Naive thymus-derived CD4-positive, alpha-beta T cell (primary cell): ENCODE measurements at regions of chr10 and their contacts with region 1.

Region 1: DNA sequence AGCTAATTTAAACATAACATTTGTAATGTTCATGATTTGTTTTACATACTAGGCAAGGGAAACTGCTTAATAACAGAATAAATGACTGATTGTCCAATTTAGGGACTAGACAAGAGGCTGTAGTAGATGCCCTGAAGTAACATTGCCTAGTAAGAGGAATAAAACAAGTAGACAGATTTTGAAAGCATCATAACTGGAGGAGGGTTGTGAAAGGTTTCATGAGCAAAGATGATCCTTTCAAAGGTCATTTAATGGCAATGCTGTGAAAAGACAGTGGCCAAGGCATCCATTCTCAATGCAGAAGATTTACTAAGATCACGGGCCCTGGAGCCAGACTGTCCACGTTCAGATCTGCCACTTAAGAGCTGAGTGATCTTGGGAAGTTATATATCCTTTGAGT is 44.8 kb upstream of the HHEX start:
- DNase-seq: no peak
- ATAC-seq: no peak
- H3K4me3 ChIP-seq: no peak overlapping the region
- H3K4me3 Mint-ChIP-seq: no peak overlapping the region
- H3K27ac ChIP-seq: no peak overlapping the region
- H3K27ac Mint-ChIP-seq: no peak overlapping the region
- H3K4me1 ChIP-seq: no peaks in the 10 kb centered on the region
- H3K4me1 Mint-ChIP-seq: peaks cover 0 to 13% (median 0%) of the 10 kb centered on the region in 7 donors
- H3K27me3 ChIP-seq: no peaks in the 10 kb centered on the region
- H3K27me3 Mint-ChIP-seq: no peaks in the 10 kb centered on the region

Region 2: GRCh38 chr10:92517034-92517655 is 127.8 kb before region 1 on chr10:
- CTCF ChIA-PET with region 1: no interaction called
- POLR2A ChIA-PET with region 1: no interaction called
- intact Hi-C with region 1: loop called in 1 of 2 experiments (anchors 2 kb)
- DNase-seq: peak; percentile 18 to 74 (median 64)
- ATAC-seq: peak; percentile 98
- H3K4me3 ChIP-seq: no peak overlapping the region
- H3K4me3 Mint-ChIP-seq: no peak overlapping the region
- H3K27ac ChIP-seq: no peak overlapping the region
- H3K27ac Mint-ChIP-seq: peak overlapping the region in 3 of 9 donors; percentile 46 to 64 (median 54)
- H3K4me1 ChIP-seq: peaks cover 0 to 7% of the 10 kb centered on the region in 2 donors
- H3K4me1 Mint-ChIP-seq: peaks cover 7 to 9% (median 8%) of the 10 kb centered on the region in 7 donors
- H3K27me3 ChIP-seq: no peaks in the 10 kb centered on the region
- H3K27me3 Mint-ChIP-seq: no peaks in the 10 kb centered on the region

Region 3: DNA sequence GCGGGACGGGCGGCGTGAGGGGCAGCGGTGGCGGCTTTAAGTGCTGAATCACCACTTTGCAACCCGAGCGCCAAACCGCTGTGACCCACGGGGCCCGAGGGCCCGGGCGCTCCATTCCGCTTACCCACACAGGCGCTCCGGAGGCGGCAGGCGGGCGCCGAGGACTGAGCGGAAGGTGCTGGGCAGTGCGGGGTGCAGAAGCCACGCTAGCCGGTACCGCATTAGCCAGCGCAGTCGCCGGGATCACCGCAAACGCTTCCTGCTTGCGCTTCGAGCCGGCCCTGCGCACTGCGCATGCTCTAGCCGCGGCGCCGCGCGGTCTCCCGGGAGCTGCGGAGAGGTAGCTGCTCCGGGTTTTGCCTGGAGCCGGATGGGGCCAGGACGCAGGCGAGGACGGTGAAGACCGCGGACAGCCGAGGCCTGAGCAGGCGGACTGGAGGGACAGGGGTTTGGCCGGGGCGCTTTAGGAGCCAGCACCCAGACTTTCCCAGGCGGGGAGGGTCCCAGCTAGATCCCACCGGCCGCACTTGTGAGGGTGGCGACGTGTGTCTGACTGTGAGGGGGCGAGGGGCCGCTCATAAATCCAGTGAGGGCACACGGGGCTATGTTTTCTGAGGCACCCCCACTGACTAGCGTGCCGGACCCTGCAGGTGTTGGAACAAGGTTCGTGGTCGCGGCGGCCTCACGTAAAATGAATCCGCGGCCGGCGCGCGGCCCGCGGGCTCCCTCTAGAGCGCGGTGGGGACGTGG is 70.9 kb before region 1 on chr10 and contains the start of gene IDE:
- CTCF ChIA-PET with region 1: no interaction called
- POLR2A ChIA-PET with region 1: no interaction called
- intact Hi-C with region 1: loop called in 1 of 2 experiments (anchors 1 kb)
- DNase-seq: peak; percentile 70 to 89 (median 77)
- ATAC-seq: peak; percentile 88
- H3K4me3 ChIP-seq: peak within 1 kb of the TSS; percentile 90
- H3K4me3 Mint-ChIP-seq: peak within 1 kb of the TSS; percentile 78 to 94 (median 88)
- H3K27ac ChIP-seq: peak within 1 kb of the TSS; percentile 83
- H3K27ac Mint-ChIP-seq: peak within 1 kb of the TSS; percentile 78 to 95 (median 89)
- H3K4me1 ChIP-seq: peaks cover 12 to 14% of the 10 kb centered on the region in 2 donors
- H3K4me1 Mint-ChIP-seq: peaks cover 27 to 39% (median 38%) of the 10 kb centered on the region in 7 donors
- H3K27me3 ChIP-seq: no peaks in the 10 kb centered on the region
- H3K27me3 Mint-ChIP-seq: no peaks in the 10 kb centered on the region
- total RNA-seq, gene IDE: 20.7 to 36.7 (median 28.4) TPM